PC-9 (cell line): ENCODE measurements at regions of chr22 and their contacts with region 1.

Region 1: GRCh38 chr22:37933711-37934376 is 19.6 kb downstream of the C22orf23 start:
- DNase-seq: peak; percentile 87 to 95
- H3K4me3 ChIP-seq: no peak overlapping the region
- H3K27ac ChIP-seq: peak overlapping the region; percentile 17; the same call in 1 of the 2 replicates
- H3K4me1 ChIP-seq: peaks cover 17% of the 10 kb centered on the region
- H3K27me3 ChIP-seq: no peaks in the 10 kb centered on the region
- CTCF ChIP-seq: peak; percentile 97

Region 2: DNA sequence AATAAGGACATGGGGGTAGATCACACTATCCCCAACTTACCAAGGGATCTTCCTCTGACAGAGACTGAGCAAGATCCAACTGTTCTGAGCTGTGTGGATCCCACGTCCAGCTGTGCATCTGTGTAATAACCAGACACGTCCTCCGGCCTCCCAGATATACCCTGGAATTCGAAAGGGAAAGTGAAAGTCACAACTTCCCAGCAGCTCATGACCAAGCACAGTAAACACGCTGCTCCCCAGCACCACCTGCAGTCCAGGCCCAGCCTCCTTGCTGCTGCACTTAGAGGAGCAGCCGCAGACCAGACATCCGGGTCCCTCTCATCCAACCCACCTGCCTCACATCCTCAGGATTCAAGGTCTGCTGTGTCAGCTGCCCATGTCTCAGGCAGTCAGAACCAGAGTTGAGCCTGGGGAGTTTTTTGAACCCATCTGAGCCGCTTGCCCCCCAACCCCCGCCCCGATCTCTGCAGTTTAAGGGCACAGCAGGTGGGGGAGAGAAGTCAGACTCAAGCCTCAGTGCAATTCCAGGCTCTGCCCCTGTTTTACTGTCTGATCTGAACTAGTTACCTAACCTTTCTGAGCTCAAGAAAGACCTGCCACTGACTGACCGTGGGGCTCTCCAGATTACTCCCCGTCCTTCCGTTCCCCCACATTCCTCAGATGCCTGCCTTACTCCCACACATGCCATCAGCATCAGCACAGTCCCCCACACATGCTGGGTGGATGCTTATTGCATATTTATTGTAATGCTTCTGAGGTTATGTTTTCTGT is 1694.3 kb before region 1 on chr22 and contains the start of gene APOL2:
- CTCF ChIA-PET with region 1: no interaction called
- POLR2A ChIA-PET with region 1: interaction called, 16 read pairs
- intact Hi-C with region 1: no loop called
- DNase-seq: peak; percentile 86 to 91
- H3K4me3 ChIP-seq: peak within 1 kb of the TSS; percentile 70
- H3K27ac ChIP-seq: peak within 1 kb of the TSS; percentile 48
- H3K4me1 ChIP-seq: peaks cover 21% of the 10 kb centered on the region
- H3K27me3 ChIP-seq: no peaks in the 10 kb centered on the region
- CTCF ChIP-seq: peak; percentile 74
- total RNA-seq, gene APOL2: 19.9 and 27.4 TPM in 2 replicates

Region 3: GRCh38 chr22:37905534-37906363 is 28.1 kb before region 1 on chr22 and contains the start of gene MICALL1:
- CTCF ChIA-PET with region 1: interaction called, 19 read pairs
- POLR2A ChIA-PET with region 1: no interaction called
- intact Hi-C with region 1: loop called (anchors 2 kb)
- DNase-seq: peak; percentile 63 to 90
- H3K4me3 ChIP-seq: peak within 1 kb of the TSS; percentile 81
- H3K27ac ChIP-seq: peak within 1 kb of the TSS; percentile 99
- H3K4me1 ChIP-seq: peaks cover 41% of the 10 kb centered on the region
- H3K27me3 ChIP-seq: no peaks in the 10 kb centered on the region
- CTCF ChIP-seq: 0 out of 2 replicates have a peak, but pooled peaks have one; percentile 20
- total RNA-seq, gene MICALL1: 113 and 126 TPM in 2 replicates

Region 4: GRCh38 chr22:37910890-37911743 is 22.7 kb before region 1 on chr22:
- CTCF ChIA-PET with region 1: interaction called, 19 read pairs
- POLR2A ChIA-PET with region 1: no interaction called
- intact Hi-C with region 1: loop called (anchors 2 kb)
- DNase-seq: no peak
- H3K4me3 ChIP-seq: no peak overlapping the region
- H3K27ac ChIP-seq: no peak overlapping the region
- H3K4me1 ChIP-seq: peaks cover 15% of the 10 kb centered on the region
- H3K27me3 ChIP-seq: no peaks in the 10 kb centered on the region
- CTCF ChIP-seq: no peak

Region 5: DNA sequence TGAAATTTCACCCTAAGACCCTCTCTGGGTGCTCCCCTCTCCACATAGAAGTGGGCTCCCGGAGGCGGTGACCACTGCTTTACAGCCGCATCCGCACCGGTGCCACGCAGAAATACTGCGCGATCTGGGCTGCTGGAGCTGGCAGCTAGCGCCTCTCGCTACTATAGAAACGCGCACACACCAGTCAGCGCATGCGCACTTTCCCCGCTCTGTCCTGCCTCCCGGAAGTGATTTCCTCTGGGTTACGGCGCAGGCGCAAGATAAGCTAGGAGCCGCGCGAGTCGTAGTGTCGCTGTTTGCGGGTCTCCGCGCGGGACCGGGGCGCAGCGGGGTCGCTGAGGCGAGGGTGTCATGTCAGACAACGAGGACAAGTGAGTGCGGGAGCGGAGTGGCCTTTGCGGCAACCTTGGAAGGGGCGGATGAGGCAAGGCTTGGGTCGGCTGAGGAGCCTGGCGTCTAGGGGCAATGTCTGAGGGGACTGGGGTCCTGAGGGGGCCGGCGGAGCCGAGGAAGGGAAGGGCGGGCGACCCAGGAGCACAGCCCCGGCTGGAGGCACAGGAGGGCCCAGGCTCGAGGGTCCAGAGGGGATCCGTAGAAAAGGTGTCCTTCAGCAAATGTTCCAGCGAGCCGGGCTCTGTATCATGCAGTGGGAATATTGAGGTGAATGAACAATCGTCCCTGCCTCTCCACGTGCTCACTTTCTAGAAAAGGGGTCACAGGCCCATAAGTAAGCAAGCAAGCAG is 19.8 kb after region 1 on chr22 and contains the starts of genes C22orf23 and POLR2F:
- CTCF ChIA-PET with region 1: interaction called, 20 read pairs
- POLR2A ChIA-PET with region 1: interaction called, 5 read pairs
- intact Hi-C with region 1: no loop called
- DNase-seq: peak; percentile 91 to 96
- H3K4me3 ChIP-seq: peak within 1 kb of the TSS; percentile 68
- H3K27ac ChIP-seq: peak within 1 kb of the TSS; percentile 1; the same call in 1 of the 2 replicates
- H3K4me1 ChIP-seq: peaks cover 18% of the 10 kb centered on the region
- H3K27me3 ChIP-seq: no peaks in the 10 kb centered on the region
- CTCF ChIP-seq: no peak
- total RNA-seq, gene C22orf23: 1.0 and 1.7 TPM in 2 replicates
- total RNA-seq, gene POLR2F: 147 and 180 TPM in 2 replicates

Region 6: GRCh38 chr22:37965940-37966664 is 32.3 kb after region 1 on chr22:
- CTCF ChIA-PET with region 1: interaction called, 7 read pairs
- POLR2A ChIA-PET with region 1: no interaction called
- intact Hi-C with region 1: loop called (anchors 2 kb)
- DNase-seq: no peak
- H3K4me3 ChIP-seq: no peak overlapping the region
- H3K27ac ChIP-seq: no peak overlapping the region
- H3K4me1 ChIP-seq: no peaks in the 10 kb centered on the region
- H3K27me3 ChIP-seq: no peaks in the 10 kb centered on the region
- CTCF ChIP-seq: no peak